ENCODE measurements at regions of chr7 and their contacts with region 1.

Region 1: DNA sequence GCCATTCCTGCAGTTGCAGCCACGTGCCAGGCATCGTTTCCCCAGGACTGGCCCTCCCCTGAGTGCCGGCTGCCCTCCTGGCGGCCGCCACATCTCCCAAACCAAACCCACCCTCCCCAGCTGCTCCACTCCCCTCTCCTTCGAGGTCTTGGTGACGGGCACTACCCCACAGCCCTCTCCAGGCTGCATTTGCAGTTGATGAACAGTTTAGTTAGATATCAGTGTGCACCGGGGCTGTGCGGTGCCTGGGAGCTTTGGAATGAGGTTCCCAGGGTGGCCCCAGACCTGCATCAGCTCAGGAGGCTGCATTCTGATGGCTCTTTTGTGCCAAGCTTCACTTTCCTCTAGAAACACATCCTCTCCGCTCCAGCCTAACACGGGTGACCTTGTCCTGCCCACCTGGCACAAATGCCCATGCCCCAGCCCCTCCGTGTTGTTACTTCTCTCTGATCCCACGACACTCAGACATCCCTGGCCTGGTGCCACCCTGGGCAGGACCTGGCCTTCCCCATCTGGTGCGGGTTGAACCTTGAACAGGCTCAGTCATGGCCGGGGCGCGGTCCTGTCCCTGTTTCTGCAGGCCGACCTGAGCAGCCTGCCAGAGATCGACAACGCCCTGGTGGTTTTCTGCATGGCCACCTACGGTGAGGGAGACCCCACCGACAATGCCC is 14.5 kb downstream of the TMEM120A start:
- DNase-seq: no peak
- ATAC-seq: no peak

Region 2: GRCh38 chr7:75010036-75010435 is 969.9 kb before region 1 on chr7:
- intact Hi-C with region 1: loop called (anchors 5 kb)
- DNase-seq: no peak
- ATAC-seq: no peak

Region 3: DNA sequence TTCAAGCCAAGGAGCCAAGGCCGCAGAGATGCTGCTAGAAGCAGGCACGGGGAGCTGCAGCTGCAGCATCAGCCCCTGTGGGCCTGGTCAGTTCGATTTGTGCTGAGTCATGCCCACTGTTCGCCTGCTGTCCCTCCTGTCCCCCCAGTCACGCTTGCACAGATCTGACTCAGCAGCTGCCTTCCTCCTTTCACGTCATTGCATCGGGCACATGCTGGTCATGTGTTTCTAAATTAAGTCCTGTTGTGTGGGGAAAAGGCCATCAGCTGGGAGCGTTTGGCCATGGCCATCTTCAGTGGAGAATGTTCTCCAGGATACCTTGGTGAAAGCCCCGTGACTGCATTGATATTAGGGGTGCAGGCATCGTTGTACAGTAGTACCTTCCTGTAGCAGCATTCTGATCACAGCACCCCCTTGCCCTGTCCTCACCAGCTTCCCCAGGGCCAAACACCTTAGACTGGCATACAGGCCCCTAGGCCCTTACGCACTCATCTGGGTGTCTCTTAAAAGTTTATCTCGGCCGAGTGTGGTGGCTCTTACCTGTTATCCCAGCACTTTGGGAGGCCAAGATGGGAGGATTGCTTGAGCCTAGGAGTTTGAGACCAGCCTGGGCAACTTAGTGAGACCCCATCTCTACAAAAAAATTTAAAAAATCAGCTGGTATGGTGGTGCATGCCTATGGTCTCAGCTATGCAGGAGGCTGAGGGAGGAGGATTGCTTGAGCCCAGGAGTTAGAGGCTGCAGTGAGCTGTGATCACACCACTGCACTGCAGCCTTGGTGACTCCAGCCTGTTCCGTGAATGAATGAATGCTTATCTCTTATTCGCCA is 41.7 kb before region 1 on chr7:
- intact Hi-C with region 1: no loop called
- DNase-seq: peak; percentile 76
- ATAC-seq: peak; percentile 97

Region 4: DNA sequence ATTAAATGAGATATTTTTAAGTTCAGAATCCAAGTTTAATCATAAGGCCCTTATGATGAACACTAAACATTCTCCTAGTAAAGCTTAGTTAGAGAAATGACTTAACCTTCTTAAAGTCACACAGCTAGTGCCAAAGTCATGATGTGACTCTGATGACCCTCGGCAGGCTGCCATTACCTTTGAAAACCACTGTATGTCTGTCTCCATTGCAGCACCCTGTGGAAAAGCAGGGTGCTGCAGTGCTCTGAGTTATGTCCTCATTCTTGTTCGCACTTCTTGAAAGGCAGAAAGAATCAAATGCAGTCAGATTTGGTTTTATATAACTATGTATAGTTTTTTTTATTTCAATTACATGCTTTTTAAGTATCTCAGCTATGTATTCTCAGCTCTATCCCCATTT is 1923.7 kb after region 1 on chr7:
- intact Hi-C with region 1: no loop called
- DNase-seq: no peak
- ATAC-seq: no peak